GM12878 (cell line): ENCODE measurements at regions of chr6 and their contacts with region 1.

Region 1: DNA sequence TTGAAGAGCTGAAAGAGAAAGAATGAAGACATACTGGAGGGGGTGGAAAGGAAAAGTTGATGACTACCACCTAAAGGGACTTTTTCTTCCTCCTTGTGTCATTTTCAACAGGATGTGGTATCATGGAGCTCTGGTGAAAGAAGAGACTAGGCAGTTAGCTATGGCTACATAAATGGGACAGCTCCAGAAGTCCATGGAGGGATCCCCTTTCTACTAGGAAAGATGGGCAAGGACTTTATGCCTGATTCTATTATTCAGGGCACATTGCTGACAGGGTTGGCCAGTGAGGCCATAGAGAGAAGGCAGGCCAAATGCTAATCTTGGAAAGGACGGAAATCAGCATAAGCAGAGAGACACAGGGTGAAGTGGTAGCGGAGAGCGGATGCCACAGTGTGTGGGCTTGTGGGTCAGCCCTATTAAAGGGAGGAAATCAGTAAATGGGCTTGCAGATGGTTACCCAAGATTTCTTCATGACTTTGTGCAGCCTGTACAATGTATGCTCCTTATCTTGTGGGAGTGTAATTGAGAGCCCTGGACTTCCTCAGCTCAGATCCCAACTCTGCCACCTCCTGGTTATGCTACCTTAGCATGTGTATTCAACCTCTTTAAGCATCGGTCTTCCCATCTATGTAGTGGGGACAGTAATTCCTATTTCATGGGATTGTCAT is 77.4 kb upstream of the TMEM170B start:
- DNase-seq: peak; percentile 75
- ATAC-seq: peak; percentile 65
- H3K4me3 ChIP-seq: peak overlapping the region; percentile 28; the same call in 1 of the 2 replicates
- H3K27ac ChIP-seq: peak overlapping the region; percentile 96
- H3K4me1 ChIP-seq: peaks cover 40% of the 10 kb centered on the region
- H3K27me3 ChIP-seq: no peaks in the 10 kb centered on the region
- CTCF ChIP-seq: peak in 2 of 3 experiments; percentile 17 to 21; a peak in 3 of 6 replicates
- EP300 ChIP-seq: 0 out of 4 replicates have a peak, but pooled peaks of 1 of the 2 experiments have one; percentile 7
- POLR2A ChIP-seq: 0 out of 2 replicates have a peak, but pooled peaks have one; percentile 37
- RAD21 ChIP-seq: no peak; the same call in 1 of the 2 replicates

Region 2: DNA sequence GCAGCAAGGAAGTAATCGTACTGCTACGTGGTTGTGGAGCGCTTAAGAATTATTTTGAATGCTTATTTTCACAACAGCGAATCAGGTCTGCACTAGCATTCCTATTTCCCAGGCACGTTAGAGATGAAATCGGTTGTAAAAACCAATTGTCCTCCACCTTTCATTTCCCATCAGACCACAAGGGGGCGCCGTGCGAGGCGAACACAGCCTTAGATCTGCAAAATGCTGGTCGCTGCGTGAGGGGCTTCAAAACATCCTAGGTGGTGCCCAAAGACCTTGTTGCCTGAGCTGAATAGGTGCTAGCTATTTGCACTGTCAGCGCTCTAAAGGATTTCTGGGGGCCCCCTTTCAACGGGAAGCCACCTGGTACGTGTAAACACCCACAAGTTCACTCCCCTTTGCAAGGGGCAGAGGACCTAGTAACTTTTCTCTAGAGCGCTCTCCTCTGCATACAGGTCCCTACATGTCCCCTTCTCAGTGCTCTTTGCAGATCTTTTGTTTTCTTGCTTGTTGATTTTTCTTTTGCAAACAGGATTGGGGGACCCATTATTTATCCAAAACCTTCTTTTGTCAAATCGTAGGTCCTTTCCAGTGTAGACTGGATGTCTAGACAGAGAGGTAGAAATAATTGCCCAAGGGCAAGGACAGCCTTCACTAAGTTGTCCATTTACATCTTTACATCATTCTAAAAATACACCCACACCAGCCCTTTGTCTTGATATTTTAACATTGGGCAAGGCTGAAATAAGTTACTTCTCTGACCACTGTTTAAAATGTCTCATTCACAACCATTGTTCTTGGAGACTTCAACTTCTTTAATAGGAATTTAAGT is 287.4 kb before region 1 on chr6:
- CTCF ChIA-PET with region 1: interaction called, 10 read pairs
- POLR2A ChIA-PET with region 1: no interaction called
- RAD21 ChIA-PET with region 1: interaction called, 4 read pairs
- SMC1A ChIA-PET with region 1: interaction called, 5 read pairs
- in situ Hi-C with region 1: no loop called
- intact Hi-C with region 1: no loop called
- DNase-seq: no peak
- ATAC-seq: peak; percentile 89
- H3K4me3 ChIP-seq: no peak overlapping the region
- H3K27ac ChIP-seq: no peak overlapping the region
- H3K4me1 ChIP-seq: no peaks in the 10 kb centered on the region
- H3K27me3 ChIP-seq: no peaks in the 10 kb centered on the region
- CTCF ChIP-seq: peak; percentile 81 to 88 (median 81)
- EP300 ChIP-seq: no peak
- POLR2A ChIP-seq: no peak
- RAD21 ChIP-seq: peak; percentile 83

Region 3: GRCh38 chr6:11346516-11346915 is 113.6 kb before region 1 on chr6:
- CTCF ChIA-PET with region 1: no interaction called
- POLR2A ChIA-PET with region 1: interaction called, 5 read pairs
- RAD21 ChIA-PET with region 1: interaction called, 12 read pairs
- SMC1A ChIA-PET with region 1: interaction called, 26 read pairs
- in situ Hi-C with region 1: no loop called
- intact Hi-C with region 1: no loop called
- DNase-seq: peak; percentile 71
- ATAC-seq: peak; percentile 87
- H3K4me3 ChIP-seq: no peak overlapping the region
- H3K27ac ChIP-seq: peak overlapping the region; percentile 65
- H3K4me1 ChIP-seq: peaks cover 39% of the 10 kb centered on the region
- H3K27me3 ChIP-seq: no peaks in the 10 kb centered on the region
- CTCF ChIP-seq: no peak
- EP300 ChIP-seq: peak in 1 of 2 experiments; percentile 22; a peak in 1 of 4 replicates
- POLR2A ChIP-seq: no peak
- RAD21 ChIP-seq: no peak

Region 4: GRCh38 chr6:11392778-11393507 is 67.2 kb before region 1 on chr6:
- CTCF ChIA-PET with region 1: interaction called, 11 read pairs
- POLR2A ChIA-PET with region 1: interaction called, 5 read pairs
- RAD21 ChIA-PET with region 1: interaction called, 18 read pairs
- SMC1A ChIA-PET with region 1: interaction called, 249 read pairs
- in situ Hi-C with region 1: no loop called
- intact Hi-C with region 1: no loop called
- DNase-seq: no peak
- ATAC-seq: no peak
- H3K4me3 ChIP-seq: no peak overlapping the region
- H3K27ac ChIP-seq: no peak overlapping the region
- H3K4me1 ChIP-seq: peaks cover 4% of the 10 kb centered on the region
- H3K27me3 ChIP-seq: no peaks in the 10 kb centered on the region
- CTCF ChIP-seq: no peak
- EP300 ChIP-seq: no peak
- POLR2A ChIP-seq: no peak
- RAD21 ChIP-seq: no peak

Region 5: DNA sequence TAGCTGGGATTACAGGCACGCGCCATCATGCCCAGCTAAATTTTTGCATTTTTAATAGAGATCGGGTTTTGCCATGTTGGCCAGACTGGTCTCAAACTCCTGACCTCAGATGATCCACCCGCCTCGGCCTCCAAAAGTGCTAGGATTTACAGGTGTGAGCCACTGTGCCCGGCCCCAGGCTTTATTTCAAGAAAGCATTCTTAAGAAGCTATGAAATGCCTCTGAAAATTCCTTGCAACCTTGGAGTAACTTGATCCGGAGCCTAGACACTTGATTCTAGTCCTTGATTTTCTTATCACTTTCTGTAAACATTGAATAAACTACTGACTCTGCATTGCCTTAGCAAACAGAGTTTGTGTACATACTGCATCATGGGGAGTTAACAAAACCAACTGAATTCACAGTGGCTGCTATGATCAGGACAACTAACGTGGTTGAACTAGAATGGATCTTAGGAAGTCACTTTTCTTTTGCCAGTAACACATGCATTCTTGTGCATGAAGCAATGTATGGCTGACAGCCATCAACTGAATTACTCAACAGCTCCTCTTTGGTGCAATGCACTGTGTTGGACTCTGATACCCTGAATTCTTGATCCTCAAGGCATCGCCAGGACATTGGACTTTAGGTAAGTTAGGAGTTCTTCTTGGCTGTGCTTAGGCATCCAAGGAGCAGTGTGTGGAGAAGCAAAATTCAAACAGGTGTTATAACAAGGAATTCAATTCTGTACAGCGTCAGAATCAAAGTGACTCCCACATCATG is 25.4 kb before region 1 on chr6:
- CTCF ChIA-PET with region 1: interaction called, 8 read pairs
- POLR2A ChIA-PET with region 1: interaction called, 4 read pairs
- RAD21 ChIA-PET with region 1: interaction called, 71 read pairs
- SMC1A ChIA-PET with region 1: interaction called, 110 read pairs
- in situ Hi-C with region 1: no loop called
- intact Hi-C with region 1: loop called (anchors 1 kb)
- DNase-seq: no peak
- ATAC-seq: no peak
- H3K4me3 ChIP-seq: no peak overlapping the region
- H3K27ac ChIP-seq: no peak overlapping the region
- H3K4me1 ChIP-seq: peaks cover 13% of the 10 kb centered on the region
- H3K27me3 ChIP-seq: no peaks in the 10 kb centered on the region
- CTCF ChIP-seq: no peak
- EP300 ChIP-seq: no peak
- POLR2A ChIP-seq: no peak
- RAD21 ChIP-seq: no peak

Region 6: GRCh38 chr6:11563793-11564192 is 103.7 kb after region 1 on chr6:
- CTCF ChIA-PET with region 1: no interaction called
- POLR2A ChIA-PET with region 1: no interaction called
- RAD21 ChIA-PET with region 1: no interaction called
- SMC1A ChIA-PET with region 1: no interaction called
- in situ Hi-C with region 1: no loop called
- intact Hi-C with region 1: no loop called
- DNase-seq: no peak
- ATAC-seq: no peak
- H3K4me3 ChIP-seq: no peak overlapping the region
- H3K27ac ChIP-seq: no peak overlapping the region
- H3K4me1 ChIP-seq: no peaks in the 10 kb centered on the region
- H3K27me3 ChIP-seq: no peaks in the 10 kb centered on the region
- CTCF ChIP-seq: no peak
- EP300 ChIP-seq: no peak
- POLR2A ChIP-seq: no peak
- RAD21 ChIP-seq: no peak